ENCODE measurements at regions of chr4 and their contacts with region 1.

Region 1: GRCh38 chr4:165355900-165356300 is 22.9 kb upstream of the CPE start:
- DNase-seq: peak; percentile 66
- H3K4me3 Mint-ChIP-seq: no peak overlapping the region
- H3K27ac Mint-ChIP-seq: no peak overlapping the region
- H3K4me1 Mint-ChIP-seq: peaks cover 32% of the 10 kb centered on the region
- H3K27me3 Mint-ChIP-seq: no peaks in the 10 kb centered on the region
- CTCF ChIP-seq: peak; percentile 50

Region 2: DNA sequence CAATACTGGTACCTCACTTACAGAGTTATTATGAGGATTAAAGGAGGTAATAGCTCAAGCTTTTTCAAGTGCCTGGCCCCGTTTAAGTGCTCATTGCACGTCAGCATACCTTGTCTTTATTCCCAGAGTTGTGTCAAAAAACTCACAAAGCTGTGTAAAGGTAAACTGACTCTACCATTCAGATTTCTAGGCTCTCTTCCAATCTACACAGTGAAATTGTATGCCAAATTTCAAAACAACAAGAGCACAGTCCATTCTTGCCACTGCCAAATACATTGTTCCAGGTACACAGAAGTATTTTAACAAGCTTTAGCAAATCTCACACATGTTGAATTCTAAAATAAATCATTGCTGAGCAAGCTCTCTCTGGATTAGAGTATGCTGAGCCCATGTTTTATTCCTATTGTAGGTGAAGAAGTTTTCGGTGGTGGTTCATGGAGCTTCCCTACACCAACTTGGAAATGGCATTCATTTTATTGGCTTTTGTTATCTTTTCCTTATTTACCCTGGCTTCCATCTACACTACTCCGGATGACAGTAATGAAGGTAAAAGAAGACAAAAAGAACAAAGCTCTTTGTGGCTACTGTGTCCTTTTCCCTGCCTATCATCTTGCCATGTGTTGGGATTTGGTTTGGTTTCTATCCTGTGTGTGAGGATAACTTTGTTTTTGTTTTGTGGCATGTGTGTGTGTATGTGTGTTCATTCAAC is 585.7 kb before region 1 on chr4:
- CTCF ChIA-PET with region 1: no interaction called
- POLR2A ChIA-PET with region 1: no interaction called
- intact Hi-C with region 1: no loop called
- DNase-seq: no peak
- H3K4me3 Mint-ChIP-seq: no peak overlapping the region
- H3K27ac Mint-ChIP-seq: peak overlapping the region; percentile 19
- H3K4me1 Mint-ChIP-seq: peaks cover 15% of the 10 kb centered on the region
- H3K27me3 Mint-ChIP-seq: peaks cover 27% of the 10 kb centered on the region
- CTCF ChIP-seq: no peak

Region 3: DNA sequence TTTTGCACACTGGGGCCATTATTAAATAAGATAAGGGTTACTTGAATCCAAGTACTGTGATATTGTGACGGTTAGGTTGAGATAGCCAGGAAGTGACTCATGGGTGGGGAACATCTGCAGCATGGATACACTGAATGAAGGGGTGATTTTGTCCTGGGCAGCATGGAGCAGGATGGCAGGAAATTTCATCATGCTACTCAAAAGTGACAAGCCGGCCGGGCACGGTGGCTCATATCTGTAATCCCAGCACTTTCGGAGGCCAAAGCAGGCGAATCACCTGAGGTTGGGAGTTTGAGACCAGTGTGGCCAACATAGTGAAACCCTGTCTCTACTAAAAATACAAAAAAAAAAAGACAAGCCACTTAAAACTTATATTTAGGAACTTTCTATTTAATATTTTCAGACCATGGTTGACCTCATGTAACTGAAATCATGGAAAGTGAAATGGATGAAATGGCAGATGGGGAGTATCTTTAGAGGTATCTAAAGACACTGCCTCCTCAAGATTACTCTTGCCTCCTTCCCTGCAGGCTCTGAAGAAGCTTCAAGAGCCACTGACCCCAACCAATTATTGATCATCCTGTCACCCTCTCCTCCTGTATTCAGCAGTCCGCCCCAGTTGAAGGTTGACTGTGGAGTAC is 328.0 kb before region 1 on chr4:
- CTCF ChIA-PET with region 1: no interaction called
- POLR2A ChIA-PET with region 1: no interaction called
- intact Hi-C with region 1: no loop called
- DNase-seq: peak; percentile 10
- H3K4me3 Mint-ChIP-seq: no peak overlapping the region
- H3K27ac Mint-ChIP-seq: no peak overlapping the region
- H3K4me1 Mint-ChIP-seq: no peaks in the 10 kb centered on the region
- H3K27me3 Mint-ChIP-seq: no peaks in the 10 kb centered on the region
- CTCF ChIP-seq: no peak

Region 4: DNA sequence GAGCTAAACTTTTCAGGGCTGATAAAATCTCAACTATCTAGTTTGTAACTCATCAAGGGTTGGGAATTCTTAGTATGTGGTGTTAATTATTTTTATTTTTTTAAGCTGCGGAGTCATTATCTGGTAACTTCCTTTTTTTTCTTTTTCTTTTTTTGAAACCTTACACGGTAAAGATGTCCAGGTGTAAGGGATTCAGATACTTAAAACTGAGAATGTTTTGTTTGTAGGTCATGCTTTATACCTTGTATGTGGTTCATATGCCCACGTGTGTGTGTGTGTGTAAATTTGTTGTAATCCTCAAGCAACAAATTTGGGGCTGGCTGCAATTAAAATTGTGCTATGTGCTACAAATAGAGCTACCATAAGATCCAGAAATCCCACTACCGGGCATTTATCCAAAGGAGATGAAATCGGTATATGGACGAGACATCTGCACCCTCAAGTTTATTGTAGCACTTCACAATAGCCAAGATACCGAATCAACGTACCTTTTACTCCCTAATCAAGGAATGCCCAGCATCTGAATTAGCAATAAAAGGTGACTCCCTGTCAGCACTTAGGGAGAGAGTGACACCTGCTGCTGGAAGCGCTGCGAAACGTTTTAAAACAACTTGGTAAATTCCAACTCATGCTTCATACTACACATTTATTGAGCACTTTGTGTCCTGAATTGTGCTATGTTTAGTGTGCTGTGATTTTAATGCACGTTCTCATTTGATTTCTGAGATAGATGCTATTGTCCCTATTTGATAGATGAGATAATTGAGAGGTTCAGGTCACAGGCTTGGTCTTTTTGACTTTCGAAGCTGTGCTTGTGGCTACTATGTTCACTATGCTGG is 12.3 kb before region 1 on chr4:
- CTCF ChIA-PET with region 1: interaction called, 13 read pairs
- POLR2A ChIA-PET with region 1: interaction called, 11 read pairs
- intact Hi-C with region 1: no loop called
- DNase-seq: no peak
- H3K4me3 Mint-ChIP-seq: no peak overlapping the region
- H3K27ac Mint-ChIP-seq: no peak overlapping the region
- H3K4me1 Mint-ChIP-seq: no peaks in the 10 kb centered on the region
- H3K27me3 Mint-ChIP-seq: no peaks in the 10 kb centered on the region
- CTCF ChIP-seq: no peak

Region 5: GRCh38 chr4:165378745-165379677 is 23.1 kb after region 1 on chr4 and contains the start of gene CPE:
- CTCF ChIA-PET with region 1: interaction called, 12 read pairs
- POLR2A ChIA-PET with region 1: interaction called, 3 read pairs
- intact Hi-C with region 1: no loop called
- DNase-seq: peak; percentile 75
- H3K4me3 Mint-ChIP-seq: peak within 1 kb of the TSS; percentile 77
- H3K27ac Mint-ChIP-seq: no peak within 1 kb of the TSS
- H3K4me1 Mint-ChIP-seq: peaks cover 6% of the 10 kb centered on the region
- H3K27me3 Mint-ChIP-seq: no peaks in the 10 kb centered on the region
- CTCF ChIP-seq: peak; percentile 41
- total RNA-seq, gene CPE: 8.3 and 9.1 TPM in 2 replicates

Region 6: DNA sequence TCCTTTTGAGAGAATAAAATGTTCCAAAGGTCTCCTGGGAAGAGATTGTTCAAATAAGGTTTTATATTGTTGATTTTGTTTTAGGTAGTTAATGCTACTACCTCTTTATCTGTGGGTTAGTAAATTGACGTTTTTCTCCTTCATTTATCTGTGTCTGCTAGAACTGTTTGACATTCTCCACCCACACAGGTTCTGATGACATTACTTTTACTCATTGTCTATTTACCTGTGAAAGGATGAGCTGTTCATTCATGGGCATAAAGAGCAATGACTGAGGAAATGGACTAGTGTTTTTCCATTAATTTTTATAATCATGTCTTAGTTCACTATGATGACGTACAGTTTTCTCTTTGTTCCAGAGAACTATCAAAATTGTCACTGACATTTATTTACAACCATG is 98.5 kb after region 1 on chr4:
- CTCF ChIA-PET with region 1: interaction called, 13 read pairs
- POLR2A ChIA-PET with region 1: no interaction called
- intact Hi-C with region 1: no loop called
- DNase-seq: no peak
- H3K4me3 Mint-ChIP-seq: no peak overlapping the region
- H3K27ac Mint-ChIP-seq: no peak overlapping the region
- H3K4me1 Mint-ChIP-seq: peaks cover 6% of the 10 kb centered on the region
- H3K27me3 Mint-ChIP-seq: no peaks in the 10 kb centered on the region
- CTCF ChIP-seq: no peak

Region 7: GRCh38 chr4:165464813-165465381 is 109.0 kb after region 1 on chr4:
- CTCF ChIA-PET with region 1: interaction called, 92 read pairs
- POLR2A ChIA-PET with region 1: no interaction called
- intact Hi-C with region 1: loop called (anchors 1 kb)
- DNase-seq: peak; percentile 41
- H3K4me3 Mint-ChIP-seq: no peak overlapping the region
- H3K27ac Mint-ChIP-seq: no peak overlapping the region
- H3K4me1 Mint-ChIP-seq: peaks cover 5% of the 10 kb centered on the region
- H3K27me3 Mint-ChIP-seq: no peaks in the 10 kb centered on the region
- CTCF ChIP-seq: peak; percentile 78

Region 8: DNA sequence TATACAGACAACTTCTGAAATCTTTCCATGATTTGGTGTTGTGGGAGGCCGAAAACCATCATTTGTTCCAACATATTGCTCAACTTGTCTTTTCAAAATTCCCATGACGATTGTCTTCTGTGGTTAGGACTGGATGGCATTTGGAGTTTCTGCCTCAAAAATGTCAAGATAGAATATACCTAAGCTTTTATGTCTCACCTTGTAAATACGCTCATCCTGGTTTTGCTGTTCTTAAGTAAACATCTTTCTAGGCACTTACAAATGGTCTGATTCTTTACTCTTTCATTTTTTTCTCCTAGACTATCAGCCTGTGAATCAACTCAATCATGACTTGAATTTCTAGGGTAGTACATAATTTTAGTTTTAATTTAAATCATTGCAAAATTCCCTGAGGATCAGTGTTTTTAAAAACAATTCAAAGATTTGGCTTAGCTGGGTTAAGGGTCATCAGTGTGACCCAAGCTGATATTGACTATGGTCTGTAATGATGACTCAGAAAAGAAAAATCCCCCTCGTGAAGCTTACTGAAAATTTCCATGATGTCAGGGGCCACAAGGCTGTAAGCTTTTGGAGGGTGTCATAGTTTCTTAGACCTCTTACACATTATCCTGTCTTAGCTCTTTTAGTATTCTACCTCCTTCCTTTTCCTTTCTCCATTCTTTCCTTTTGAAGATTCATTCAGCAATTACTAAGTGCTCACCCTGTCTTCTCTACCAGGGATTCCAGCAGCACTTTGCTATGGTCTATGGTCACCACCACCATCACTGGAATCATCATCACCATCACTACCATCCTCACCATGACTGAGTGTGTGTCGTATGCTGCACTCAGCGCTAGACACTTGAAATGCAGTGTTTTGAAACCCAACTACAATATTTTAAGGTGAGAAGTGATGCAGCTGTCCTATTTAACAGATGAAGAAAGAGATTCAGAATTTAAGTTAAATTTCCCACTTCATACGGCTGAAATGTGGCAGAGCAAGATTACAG is 147.3 kb after region 1 on chr4:
- CTCF ChIA-PET with region 1: no interaction called
- POLR2A ChIA-PET with region 1: no interaction called
- intact Hi-C with region 1: no loop called
- DNase-seq: peak; percentile 44
- H3K4me3 Mint-ChIP-seq: peak overlapping the region; percentile 2
- H3K27ac Mint-ChIP-seq: peak overlapping the region; percentile 71
- H3K4me1 Mint-ChIP-seq: peaks cover 37% of the 10 kb centered on the region
- H3K27me3 Mint-ChIP-seq: no peaks in the 10 kb centered on the region
- CTCF ChIP-seq: no peak

Region 9: GRCh38 chr4:165631912-165632311 is 276.0 kb after region 1 on chr4:
- CTCF ChIA-PET with region 1: no interaction called
- POLR2A ChIA-PET with region 1: no interaction called
- intact Hi-C with region 1: no loop called
- DNase-seq: no peak
- H3K4me3 Mint-ChIP-seq: no peak overlapping the region
- H3K27ac Mint-ChIP-seq: peak overlapping the region; percentile 90
- H3K4me1 Mint-ChIP-seq: peaks cover 18% of the 10 kb centered on the region
- H3K27me3 Mint-ChIP-seq: no peaks in the 10 kb centered on the region
- CTCF ChIP-seq: no peak

Measured in MCF 10A (cell line).